H1 (cell line): ENCODE measurements at regions of chr17 and their contacts with region 1.

Region 1: DNA sequence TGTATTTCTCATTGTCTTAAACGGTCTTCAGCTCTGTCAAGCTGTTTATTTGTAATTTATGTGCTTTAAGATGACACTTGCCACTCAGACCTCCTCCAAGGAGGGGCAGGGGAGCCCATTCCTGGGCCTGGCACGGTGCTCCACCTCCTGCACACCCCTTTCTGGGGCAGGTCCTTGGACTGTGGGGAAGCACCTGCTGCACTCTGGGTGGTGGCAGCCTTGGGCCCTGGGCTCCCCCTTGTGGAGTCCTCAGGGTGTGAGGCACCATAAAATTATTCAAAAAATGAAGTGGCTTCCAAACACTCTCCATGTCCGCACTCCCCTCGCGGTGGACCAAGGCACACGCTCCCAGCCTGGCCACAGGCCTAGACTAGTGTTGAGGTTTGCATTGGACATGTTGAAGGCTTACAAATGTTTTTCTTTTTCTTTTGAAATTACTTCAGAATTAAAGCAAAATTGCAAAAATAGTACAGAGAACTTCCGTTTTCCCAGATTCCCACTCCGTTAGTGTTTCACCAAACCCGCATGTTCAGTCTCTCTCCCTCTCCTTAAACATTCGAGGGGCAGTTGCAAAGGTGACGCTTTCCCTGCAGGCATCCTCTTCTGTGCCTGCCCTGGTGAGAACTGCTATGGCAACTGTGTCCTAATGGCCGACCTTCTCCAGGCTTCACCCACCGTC is 32.4 kb downstream of the FOXK2 start:
- DNase-seq: no peak
- H3K4me3 ChIP-seq: no peak overlapping the region
- H3K27ac ChIP-seq: no peak overlapping the region
- H3K4me1 ChIP-seq: peaks cover 0 to 10% (median 5%) of the 10 kb centered on the region in 4 experiments; a peak in 5 of 7 replicates
- H3K27me3 ChIP-seq: no peaks in the 10 kb centered on the region
- CTCF ChIP-seq: peak; percentile 42 to 46 (median 43)
- EP300 ChIP-seq: no peak
- POLR2A ChIP-seq: no peak
- RAD21 ChIP-seq: peak; percentile 44 to 60

Region 2: GRCh38 chr17:82494236-82495055 is 57.5 kb before region 1 on chr17:
- CTCF ChIA-PET with region 1: interaction called, 20 read pairs
- POLR2A ChIA-PET with region 1: interaction called, 4 read pairs
- DNase-seq: peak; percentile 82 to 96
- H3K4me3 ChIP-seq: peak overlapping the region; percentile 28 to 51 (median 42); a peak in 6 of 8 replicates
- H3K27ac ChIP-seq: peak overlapping the region; percentile 12; the same call in 1 of the 2 replicates
- H3K4me1 ChIP-seq: peaks cover 0 to 19% (median 9%) of the 10 kb centered on the region in 4 experiments; a peak in 6 of 7 replicates
- H3K27me3 ChIP-seq: peaks cover 2 to 23% (median 17%) of the 10 kb centered on the region in 4 experiments; a peak in 6 of 7 replicates
- CTCF ChIP-seq: peak; percentile 76 to 94 (median 93)
- EP300 ChIP-seq: no peak
- POLR2A ChIP-seq: 0 out of 3 replicates have a peak, but pooled peaks of 1 of the 2 experiments have one; percentile 27
- RAD21 ChIP-seq: peak; percentile 43 to 57

Region 3: DNA sequence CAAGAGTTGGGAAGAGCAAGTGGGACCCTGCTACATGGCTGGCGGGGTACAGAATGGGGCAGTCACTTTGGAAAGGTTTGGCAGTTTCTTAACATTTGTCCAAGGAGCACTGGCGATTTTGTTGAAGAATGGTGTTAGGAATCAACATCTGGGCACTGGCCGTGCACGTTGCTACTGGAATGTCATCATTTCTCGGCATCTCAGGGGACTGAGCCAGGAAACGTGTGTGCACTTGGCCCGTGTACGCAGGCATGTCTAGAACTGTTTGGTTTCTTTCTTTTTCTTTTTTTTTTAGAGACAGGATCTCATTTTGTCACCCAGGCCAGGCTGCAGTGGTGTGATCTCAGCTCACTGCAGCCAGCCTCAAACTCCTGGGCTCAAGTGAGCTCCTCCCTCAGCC is 49.7 kb before region 1 on chr17:
- CTCF ChIA-PET with region 1: interaction called, 11 read pairs
- POLR2A ChIA-PET with region 1: no interaction called
- DNase-seq: no peak
- H3K4me3 ChIP-seq: no peak overlapping the region
- H3K27ac ChIP-seq: no peak overlapping the region
- H3K4me1 ChIP-seq: no peaks in the 10 kb centered on the region
- H3K27me3 ChIP-seq: peaks cover 0 to 9% (median 7%) of the 10 kb centered on the region in 4 experiments; a peak in 4 of 7 replicates
- CTCF ChIP-seq: no peak
- EP300 ChIP-seq: no peak
- POLR2A ChIP-seq: no peak
- RAD21 ChIP-seq: no peak

Region 4: DNA sequence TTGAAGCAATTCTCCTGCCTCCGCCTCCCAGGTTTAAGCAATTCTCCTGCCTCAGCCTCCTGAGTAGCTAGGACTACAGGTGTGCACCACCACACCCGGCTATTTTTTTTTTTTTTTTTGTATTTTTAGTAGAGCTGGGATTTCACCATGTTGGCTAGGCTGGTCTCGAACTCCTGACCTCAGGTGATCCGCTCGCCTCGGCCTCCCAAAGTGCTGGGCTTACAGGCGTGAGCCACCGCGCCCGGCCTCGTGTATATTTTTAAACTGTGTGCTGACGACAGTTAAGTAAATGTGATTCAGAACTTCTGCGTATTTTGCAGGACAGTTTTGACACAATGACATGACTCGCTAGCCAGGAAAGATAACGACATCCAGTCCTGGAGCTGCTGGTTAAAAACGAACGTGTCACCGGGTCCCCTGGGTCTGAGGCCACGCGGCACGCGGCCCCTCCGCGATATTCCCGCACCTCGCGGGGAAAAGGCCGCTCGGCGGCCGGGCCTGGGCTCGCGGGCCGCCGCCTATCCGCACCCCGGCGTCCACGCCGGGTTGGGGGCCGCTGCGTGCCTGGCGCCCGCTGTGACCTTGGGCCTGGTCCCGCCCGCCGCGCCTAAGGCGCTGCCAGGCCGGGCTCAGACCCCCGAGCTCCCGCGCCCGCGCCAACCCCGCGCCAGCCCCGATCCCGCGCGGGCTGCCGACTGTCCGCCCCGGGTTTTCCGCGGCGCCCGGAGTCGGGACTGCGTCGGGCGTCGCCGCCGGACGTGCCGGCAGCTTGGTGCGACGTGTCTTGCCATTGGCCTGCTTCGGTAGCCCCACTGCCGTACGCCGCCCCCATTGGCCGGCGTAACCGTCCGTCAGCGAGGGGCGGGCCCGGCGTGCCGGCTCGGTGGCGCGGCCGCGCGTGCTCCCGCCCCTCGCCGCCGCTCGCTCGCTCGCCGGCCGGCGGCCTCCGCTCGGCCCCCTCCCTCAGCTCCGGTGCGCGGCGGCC is 32.8 kb before region 1 on chr17 and contains the start of gene FOXK2:
- CTCF ChIA-PET with region 1: interaction called, 11 read pairs
- POLR2A ChIA-PET with region 1: interaction called, 3 read pairs
- DNase-seq: peak; percentile 85 to 95
- H3K4me3 ChIP-seq: peak within 1 kb of the TSS; percentile 68 to 99 (median 86)
- H3K27ac ChIP-seq: no peak within 1 kb of the TSS
- H3K4me1 ChIP-seq: peaks cover 0 to 3% (median 1%) of the 10 kb centered on the region in 4 experiments; a peak in 2 of 7 replicates
- H3K27me3 ChIP-seq: no peaks in the 10 kb centered on the region
- CTCF ChIP-seq: peak in 1 of 3 experiments; percentile 2; a peak in 1 of 4 replicates
- EP300 ChIP-seq: 0 out of 3 replicates have a peak, but pooled peaks of 1 of the 2 experiments have one; percentile 53
- POLR2A ChIP-seq: peak in 1 of 2 experiments; percentile 33; a peak in 1 of 3 replicates
- RAD21 ChIP-seq: no peak
- total RNA-seq, gene FOXK2: 64.9 and 66.9 TPM in 2 replicates

Region 5: DNA sequence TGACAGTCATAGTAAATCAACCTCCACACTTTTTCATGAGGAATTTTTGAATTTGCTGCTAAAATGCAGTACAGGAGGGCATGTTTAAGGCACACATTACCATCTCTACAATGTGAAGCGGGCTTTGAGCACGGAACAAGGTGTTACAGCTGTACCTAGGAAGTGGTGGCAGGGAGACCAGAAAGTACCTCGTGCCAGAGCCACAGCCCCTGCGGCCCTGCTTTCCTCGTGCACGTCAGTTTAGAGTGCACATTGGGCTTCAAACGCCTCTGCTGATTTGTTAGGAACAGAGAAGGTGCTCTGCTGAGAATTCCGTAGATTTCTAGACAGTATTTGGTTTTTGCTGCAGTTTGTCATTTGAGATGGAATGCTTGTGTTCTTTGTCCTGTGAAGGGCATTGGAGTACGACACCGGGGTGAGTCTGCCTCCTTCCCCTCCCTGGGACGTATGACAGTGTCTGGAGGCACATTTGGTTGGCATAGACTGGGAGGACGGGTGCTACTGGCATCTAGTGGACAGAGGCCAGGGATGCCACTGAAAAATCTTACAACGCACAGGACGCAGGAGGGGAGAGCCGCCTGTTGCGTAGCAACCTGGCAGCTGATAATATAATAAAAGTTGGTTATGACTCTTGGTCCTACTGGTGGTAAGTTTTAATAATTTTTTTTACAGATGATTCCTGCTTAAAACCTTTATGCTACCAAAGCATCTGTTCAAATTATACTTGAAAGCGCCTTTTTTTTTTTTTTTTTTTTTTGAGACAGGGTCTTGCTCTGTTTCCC is 23.2 kb before region 1 on chr17:
- CTCF ChIA-PET with region 1: interaction called, 40 read pairs
- POLR2A ChIA-PET with region 1: no interaction called
- DNase-seq: no peak
- H3K4me3 ChIP-seq: no peak overlapping the region
- H3K27ac ChIP-seq: no peak overlapping the region
- H3K4me1 ChIP-seq: peaks cover 0 to 4% (median under 1%) of the 10 kb centered on the region in 4 experiments; a peak in 4 of 7 replicates
- H3K27me3 ChIP-seq: no peaks in the 10 kb centered on the region
- CTCF ChIP-seq: peak; percentile 27 to 37 (median 34); a peak in 3 of 4 replicates
- EP300 ChIP-seq: no peak
- POLR2A ChIP-seq: no peak
- RAD21 ChIP-seq: peak in 1 of 2 experiments; percentile 29; a peak in 2 of 4 replicates

Region 6: GRCh38 chr17:82536512-82537201 is 15.3 kb before region 1 on chr17:
- CTCF ChIA-PET with region 1: interaction called, 40 read pairs
- POLR2A ChIA-PET with region 1: interaction called, 3 read pairs
- DNase-seq: no peak
- H3K4me3 ChIP-seq: no peak overlapping the region
- H3K27ac ChIP-seq: peak overlapping the region; percentile 38; the same call in 1 of the 2 replicates
- H3K4me1 ChIP-seq: peaks cover 3 to 13% (median 7%) of the 10 kb centered on the region in 4 experiments; a peak in 6 of 7 replicates
- H3K27me3 ChIP-seq: no peaks in the 10 kb centered on the region
- CTCF ChIP-seq: no peak
- EP300 ChIP-seq: no peak
- POLR2A ChIP-seq: no peak
- RAD21 ChIP-seq: no peak

Region 7: GRCh38 chr17:82565551-82565950 is 13.6 kb after region 1 on chr17:
- CTCF ChIA-PET with region 1: interaction called, 26 read pairs
- POLR2A ChIA-PET with region 1: no interaction called
- DNase-seq: no peak
- H3K4me3 ChIP-seq: no peak overlapping the region
- H3K27ac ChIP-seq: no peak overlapping the region
- H3K4me1 ChIP-seq: peaks cover 0 to 7% (median 5%) of the 10 kb centered on the region in 4 experiments; a peak in 6 of 7 replicates
- H3K27me3 ChIP-seq: no peaks in the 10 kb centered on the region
- CTCF ChIP-seq: no peak
- EP300 ChIP-seq: no peak
- POLR2A ChIP-seq: no peak
- RAD21 ChIP-seq: no peak